Activated CD4-positive, alpha-beta T cell treated with anti-CD3 and anti-CD28 coated beads for 36 hours (primary cell): ENCODE measurements at regions of chr16 and their contacts with region 1.

Region 1: GRCh38 chr16:19601083-19601976 is 45.8 kb downstream of the VPS35L start:
- DNase-seq: peak; percentile 51
- ATAC-seq: no peak
- H3K4me3 Mint-ChIP-seq: no peak overlapping the region
- H3K27ac Mint-ChIP-seq: no peak overlapping the region
- H3K4me1 Mint-ChIP-seq: no peaks in the 10 kb centered on the region
- H3K27me3 Mint-ChIP-seq: no peaks in the 10 kb centered on the region

Region 2: GRCh38 chr16:19583665-19584300 is 17.5 kb before region 1 on chr16:
- CTCF ChIA-PET with region 1: interaction called, 10 read pairs
- POLR2A ChIA-PET with region 1: no interaction called
- intact Hi-C with region 1: no loop called
- DNase-seq: peak; percentile 39
- ATAC-seq: peak; percentile 82
- H3K4me3 Mint-ChIP-seq: no peak overlapping the region
- H3K27ac Mint-ChIP-seq: no peak overlapping the region
- H3K4me1 Mint-ChIP-seq: peaks cover 17% of the 10 kb centered on the region
- H3K27me3 Mint-ChIP-seq: no peaks in the 10 kb centered on the region

Region 3: DNA sequence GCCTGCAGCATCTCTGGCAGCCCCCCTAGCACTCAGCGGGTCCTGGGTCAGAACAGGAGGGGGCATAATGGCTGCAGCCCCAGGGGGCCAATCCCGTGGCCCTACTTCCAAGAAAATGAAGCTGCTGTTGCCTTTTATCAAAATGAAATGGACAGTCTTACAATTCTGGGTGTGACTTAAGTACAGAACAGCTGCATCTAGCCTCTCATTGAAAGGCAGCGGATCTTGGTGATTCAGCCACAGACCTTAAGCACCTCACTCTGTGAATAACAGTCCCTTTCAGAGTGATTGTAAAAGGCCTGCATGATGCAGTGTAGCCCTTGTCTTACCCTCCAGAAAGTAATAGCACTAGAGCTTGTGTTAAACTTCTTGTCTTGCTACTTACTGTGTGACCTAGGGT is 762.7 kb after region 1 on chr16:
- CTCF ChIA-PET with region 1: no interaction called
- POLR2A ChIA-PET with region 1: interaction called, 19 read pairs
- intact Hi-C with region 1: no loop called
- DNase-seq: no peak
- ATAC-seq: no peak
- H3K4me3 Mint-ChIP-seq: no peak overlapping the region
- H3K27ac Mint-ChIP-seq: no peak overlapping the region
- H3K4me1 Mint-ChIP-seq: no peaks in the 10 kb centered on the region
- H3K27me3 Mint-ChIP-seq: peaks cover 19% of the 10 kb centered on the region